Tibial artery (tissue), 4 donors: ENCODE measurements at regions of chr9 and their contacts with region 1.

Region 1: GRCh38 chr9:113281356-113281755 is 5.9 kb downstream of the PRPF4 start:
- DNase-seq: no peak
- H3K4me3 ChIP-seq: no peak overlapping the region
- H3K27ac ChIP-seq: no peak overlapping the region
- H3K4me1 ChIP-seq: peaks cover 0 to 15% (median 8%) of the 10 kb centered on the region in 4 donors
- H3K27me3 ChIP-seq: no peaks in the 10 kb centered on the region
- CTCF ChIP-seq: no peak

Region 2: DNA sequence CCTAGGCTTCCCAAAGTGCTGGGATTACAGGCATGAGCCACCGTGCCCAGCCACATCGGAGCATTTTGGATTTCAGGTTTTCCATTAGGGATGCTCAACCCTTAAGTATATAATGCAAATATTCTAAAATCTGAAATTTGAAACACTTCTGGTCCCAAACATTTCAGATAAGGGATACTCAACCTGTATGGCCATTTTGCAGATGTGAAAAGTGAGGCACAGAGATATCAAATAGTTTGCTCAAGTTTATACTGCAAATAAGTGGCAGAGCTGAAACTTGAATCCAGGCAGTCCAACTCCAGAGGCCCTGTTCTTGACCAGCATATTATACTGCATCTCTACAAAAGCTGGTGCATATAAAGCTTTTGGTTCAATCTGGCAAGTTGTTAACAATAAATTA is 56.4 kb after region 1 on chr9:
- intact Hi-C with region 1: loop called (anchors 5 kb)
- DNase-seq: no peak
- H3K4me3 ChIP-seq: no peak overlapping the region
- H3K27ac ChIP-seq: no peak overlapping the region
- H3K4me1 ChIP-seq: peaks cover 0 to 12% (median 11%) of the 10 kb centered on the region in 4 donors
- H3K27me3 ChIP-seq: no peaks in the 10 kb centered on the region
- CTCF ChIP-seq: no peak

Region 3: GRCh38 chr9:113609562-113610318 is 328.4 kb after region 1 on chr9:
- intact Hi-C with region 1: no loop called
- DNase-seq: peak; percentile 77 to 90
- H3K4me3 ChIP-seq: no peak overlapping the region
- H3K27ac ChIP-seq: peak overlapping the region; percentile 65 to 72
- H3K4me1 ChIP-seq: peaks cover 11 to 33% (median 24%) of the 10 kb centered on the region in 4 donors
- H3K27me3 ChIP-seq: no peaks in the 10 kb centered on the region
- CTCF ChIP-seq: no peak